Ovary (tissue), 10 donors: ENCODE measurements at regions of chr10 and their contacts with region 1.

Region 1: DNA sequence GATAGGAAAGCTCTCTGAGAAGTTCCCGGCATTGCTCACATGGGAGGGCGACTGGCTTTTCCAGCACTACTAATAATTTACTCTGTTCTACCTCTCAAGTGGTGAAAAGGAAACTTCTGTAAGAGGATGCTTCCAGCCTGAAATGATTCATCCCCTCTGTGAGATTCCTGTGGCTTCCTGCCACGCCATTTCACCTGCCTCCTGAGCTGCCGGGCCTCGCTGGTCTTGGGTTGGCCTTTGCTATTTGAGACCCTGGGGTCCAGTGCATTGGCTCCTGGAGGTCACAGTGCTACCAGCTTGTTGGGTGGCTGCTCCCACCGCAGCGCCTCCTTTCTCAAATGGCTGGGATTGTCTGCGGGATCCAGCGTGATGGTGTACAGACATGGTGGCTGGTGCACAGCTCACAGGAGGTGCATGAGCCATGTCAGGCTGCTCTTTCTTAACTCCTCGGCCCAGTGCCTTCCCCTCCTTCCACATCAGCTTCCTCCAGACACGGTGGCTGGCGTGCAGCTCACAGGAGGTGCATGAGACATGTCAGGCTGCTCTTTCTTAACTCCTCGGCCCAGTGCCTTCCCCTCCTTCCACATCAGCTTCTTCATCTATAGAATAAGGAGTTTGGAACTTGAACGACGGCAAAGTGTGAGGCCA is 42.9 kb upstream of the PCBD1 start:
- DNase-seq: no peak
- H3K4me3 ChIP-seq: no peak overlapping the region
- H3K27ac ChIP-seq: no peak overlapping the region
- H3K4me1 ChIP-seq: no peaks in the 10 kb centered on the region
- H3K27me3 ChIP-seq: no peaks in the 10 kb centered on the region
- CTCF ChIP-seq: no peak
- EP300 ChIP-seq: no peak
- POLR2A ChIP-seq: no peak

Region 2: DNA sequence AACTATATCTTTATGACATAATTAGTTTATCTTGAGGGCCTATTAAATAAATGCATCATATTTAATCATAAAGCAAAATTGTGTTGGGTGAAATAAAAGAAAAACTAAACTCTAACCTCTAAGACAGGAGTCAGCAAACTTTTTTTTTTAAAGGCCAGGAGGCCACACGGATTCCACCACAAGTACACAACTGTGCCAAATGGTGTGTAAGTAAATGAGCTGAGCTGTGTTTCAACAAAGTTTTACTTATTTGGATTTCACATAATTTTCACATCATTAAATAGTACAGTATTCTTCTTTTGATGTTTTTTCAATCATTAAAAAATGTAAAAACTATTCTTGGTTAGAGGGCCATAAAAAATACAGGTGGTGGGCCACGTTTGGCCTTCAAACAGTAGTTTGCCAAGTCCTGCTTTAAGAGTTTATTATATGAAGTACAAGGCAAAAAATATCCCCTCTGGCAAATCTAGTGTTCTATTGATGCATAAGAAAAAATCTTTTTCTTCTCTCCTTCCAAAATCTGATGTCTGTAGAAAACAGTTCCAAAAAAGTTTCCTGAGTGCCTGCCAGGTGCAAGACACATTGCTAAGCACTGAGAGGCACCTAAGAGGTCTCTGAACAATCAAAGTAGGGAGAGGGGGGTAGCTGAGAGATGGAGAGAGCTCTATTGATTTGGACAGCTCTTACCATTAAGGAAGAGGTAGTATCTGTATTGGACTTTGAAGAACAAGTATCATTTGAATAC is 1183.6 kb after region 1 on chr10:
- intact Hi-C with region 1: loop called in 1 of 4 experiments (anchors 5 kb)
- DNase-seq: no peak
- H3K4me3 ChIP-seq: no peak overlapping the region
- H3K27ac ChIP-seq: peak overlapping the region in 1 of 2 donors; percentile 21
- H3K4me1 ChIP-seq: peaks cover 3% of the 10 kb centered on the region
- H3K27me3 ChIP-seq: no peaks in the 10 kb centered on the region
- CTCF ChIP-seq: no peak
- EP300 ChIP-seq: no peak
- POLR2A ChIP-seq: no peak